CD4-positive, alpha-beta T cell (primary cell): ENCODE measurements at regions of chr1 and their contacts with region 1.

Region 1: DNA sequence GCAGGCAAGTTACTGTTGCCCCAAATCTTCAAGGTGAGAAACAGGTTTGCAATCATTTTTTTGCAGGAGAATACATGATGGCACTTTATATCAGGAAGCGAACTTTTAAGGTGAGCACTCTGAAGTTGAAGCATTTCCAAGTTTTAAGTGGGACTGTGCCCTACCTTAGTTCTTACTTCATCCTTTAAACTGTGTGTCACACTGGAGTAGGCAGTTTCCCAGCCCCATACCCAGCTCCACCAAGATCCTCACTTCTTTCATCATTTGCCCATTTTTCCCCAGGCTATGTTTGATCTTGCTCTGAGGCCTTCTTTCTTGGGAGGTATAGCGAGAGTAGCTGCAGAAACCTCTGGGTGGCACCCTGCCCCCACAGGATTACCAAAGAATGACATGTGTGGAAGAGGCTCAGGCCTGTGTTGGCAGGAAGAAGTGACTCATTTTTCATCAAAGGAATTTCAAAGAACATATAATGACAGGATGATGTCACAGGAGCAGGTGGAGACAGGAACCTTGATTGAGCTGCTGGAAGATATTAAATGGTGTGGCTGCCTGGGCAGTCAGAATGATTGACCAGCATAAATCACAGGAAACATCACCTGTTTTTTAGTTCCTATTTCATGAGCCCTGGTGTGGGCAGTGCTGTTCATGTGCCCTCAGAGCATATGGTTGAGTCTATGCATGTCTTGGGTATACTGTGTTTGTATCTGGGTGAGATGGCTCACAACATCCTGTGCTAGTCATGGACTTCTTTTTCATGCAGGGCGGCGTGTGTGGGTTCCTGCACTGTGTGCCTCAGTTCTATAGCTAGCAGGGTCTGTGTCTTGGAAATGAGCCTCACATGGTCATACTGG is 20.8 kb upstream of the MACF1 start:
- DNase-seq: peak; percentile 67 to 94 (median 80)
- ATAC-seq: peak; percentile 89
- H3K4me3 ChIP-seq: no peak overlapping the region
- H3K4me3 Mint-ChIP-seq: no peak overlapping the region
- H3K27ac ChIP-seq: peak overlapping the region; percentile 85 to 86
- H3K27ac Mint-ChIP-seq: peak overlapping the region; percentile 89
- H3K4me1 ChIP-seq: peaks cover 29% of the 10 kb centered on the region
- H3K4me1 Mint-ChIP-seq: peaks cover 42% of the 10 kb centered on the region
- H3K27me3 ChIP-seq: no peaks in the 10 kb centered on the region
- H3K27me3 Mint-ChIP-seq: no peaks in the 10 kb centered on the region
- CTCF ChIP-seq: peak; percentile 87

Region 2: GRCh38 chr1:38474738-38475623 is 708.7 kb before region 1 on chr1:
- CTCF ChIA-PET with region 1: no interaction called
- POLR2A ChIA-PET with region 1: no interaction called
- intact Hi-C with region 1: no loop called
- DNase-seq: no peak
- ATAC-seq: peak; percentile 51
- H3K4me3 ChIP-seq: no peak overlapping the region
- H3K4me3 Mint-ChIP-seq: peak overlapping the region; percentile 36
- H3K27ac ChIP-seq: no peak overlapping the region
- H3K27ac Mint-ChIP-seq: peak overlapping the region; percentile 18
- H3K4me1 ChIP-seq: peaks cover 12% of the 10 kb centered on the region
- H3K4me1 Mint-ChIP-seq: peaks cover 16% of the 10 kb centered on the region
- H3K27me3 ChIP-seq: peaks cover 21 to 33% of the 10 kb centered on the region in 2 experiments
- H3K27me3 Mint-ChIP-seq: peaks cover 66% of the 10 kb centered on the region
- CTCF ChIP-seq: no peak

Region 3: DNA sequence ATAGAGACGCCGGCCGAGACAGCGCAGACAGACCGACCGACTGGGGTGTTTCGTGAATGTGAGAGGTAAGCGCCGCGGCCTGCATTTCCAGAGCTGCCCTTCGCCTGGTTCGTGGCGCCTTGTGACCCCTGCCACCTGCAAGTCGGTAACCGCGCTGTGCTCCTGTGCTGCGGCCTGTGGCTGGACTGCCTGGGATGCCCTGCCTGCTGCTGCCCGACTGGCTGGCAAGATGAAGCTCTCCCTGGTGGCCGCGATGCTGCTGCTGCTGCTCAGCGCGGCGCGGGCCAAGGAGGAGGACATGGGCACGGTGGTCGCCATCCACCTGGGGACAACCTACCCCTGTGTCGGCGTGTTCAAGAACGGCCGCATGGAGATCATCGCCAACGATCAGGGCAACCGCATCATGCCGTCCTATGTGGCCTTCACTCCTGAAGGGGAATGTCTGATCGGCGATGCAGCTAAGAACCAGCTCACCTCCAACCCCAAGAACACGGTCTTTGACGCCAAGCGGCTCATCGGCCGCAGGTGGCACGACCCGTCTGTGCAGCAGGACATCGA is 474.9 kb before region 1 on chr1:
- CTCF ChIA-PET with region 1: no interaction called
- POLR2A ChIA-PET with region 1: no interaction called
- intact Hi-C with region 1: no loop called
- DNase-seq: no peak
- ATAC-seq: no peak
- H3K4me3 ChIP-seq: no peak overlapping the region
- H3K4me3 Mint-ChIP-seq: no peak overlapping the region
- H3K27ac ChIP-seq: no peak overlapping the region
- H3K27ac Mint-ChIP-seq: no peak overlapping the region
- H3K4me1 ChIP-seq: no peaks in the 10 kb centered on the region
- H3K4me1 Mint-ChIP-seq: no peaks in the 10 kb centered on the region
- H3K27me3 ChIP-seq: peaks cover 0 to 9% of the 10 kb centered on the region in 2 experiments
- H3K27me3 Mint-ChIP-seq: peaks cover 35% of the 10 kb centered on the region
- CTCF ChIP-seq: no peak

Region 4: DNA sequence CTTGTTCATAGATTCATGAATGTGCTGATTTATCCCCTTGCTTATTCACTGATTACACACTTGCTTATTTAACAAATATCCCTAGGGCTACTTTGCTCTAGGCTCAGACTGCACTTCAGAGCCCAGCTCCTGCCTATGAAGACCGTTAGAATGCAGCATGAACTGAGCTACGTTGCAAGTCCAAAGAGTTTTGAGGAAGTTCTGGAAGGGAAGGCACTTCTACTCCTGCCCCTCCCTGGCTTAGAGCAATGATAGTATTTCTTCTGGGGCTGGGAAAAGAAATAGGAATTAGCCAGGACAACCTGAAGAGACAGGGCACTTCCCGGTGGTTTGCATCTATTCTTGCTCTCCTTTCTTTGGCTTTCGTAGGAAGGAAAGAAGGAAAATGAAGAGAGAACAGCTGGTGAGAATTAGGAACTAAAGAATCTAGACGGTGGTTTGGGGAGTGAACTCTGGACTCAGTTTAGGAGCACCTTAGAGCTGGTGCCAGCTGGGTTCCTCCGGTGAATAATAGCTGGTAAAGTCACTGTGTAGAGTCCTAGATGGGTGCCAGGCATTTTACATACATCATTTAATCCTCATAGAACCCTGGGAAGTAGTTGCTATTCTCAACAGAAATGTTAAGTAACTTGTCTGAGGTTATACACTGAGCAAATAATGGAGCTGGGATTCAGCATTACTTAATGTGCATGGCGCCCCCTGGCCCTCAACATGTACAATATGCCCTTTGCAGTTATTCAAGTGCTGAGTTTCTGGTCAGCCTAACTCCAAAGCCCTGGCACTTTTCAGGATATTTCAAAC is 91.7 kb before region 1 on chr1:
- CTCF ChIA-PET with region 1: no interaction called
- POLR2A ChIA-PET with region 1: no interaction called
- intact Hi-C with region 1: no loop called
- DNase-seq: peak in 13 of 14 experiments; percentile 37 to 79 (median 53)
- ATAC-seq: peak; percentile 78
- H3K4me3 ChIP-seq: no peak overlapping the region
- H3K4me3 Mint-ChIP-seq: no peak overlapping the region
- H3K27ac ChIP-seq: no peak overlapping the region
- H3K27ac Mint-ChIP-seq: no peak overlapping the region
- H3K4me1 ChIP-seq: peaks cover 18% of the 10 kb centered on the region
- H3K4me1 Mint-ChIP-seq: peaks cover 10% of the 10 kb centered on the region
- H3K27me3 ChIP-seq: no peaks in the 10 kb centered on the region
- H3K27me3 Mint-ChIP-seq: no peaks in the 10 kb centered on the region
- CTCF ChIP-seq: peak; percentile 78

Region 5: GRCh38 chr1:39105061-39105840 is 78.5 kb before region 1 on chr1:
- CTCF ChIA-PET with region 1: interaction called, 5 read pairs
- POLR2A ChIA-PET with region 1: interaction called, 3 read pairs
- intact Hi-C with region 1: loop called in 1 of 2 experiments (anchors 2 kb)
- DNase-seq: peak; percentile 31 to 81 (median 60)
- ATAC-seq: peak; percentile 84
- H3K4me3 ChIP-seq: peak overlapping the region; percentile 70
- H3K4me3 Mint-ChIP-seq: peak overlapping the region; percentile 72
- H3K27ac ChIP-seq: no peak overlapping the region
- H3K27ac Mint-ChIP-seq: no peak overlapping the region
- H3K4me1 ChIP-seq: peaks cover 19% of the 10 kb centered on the region
- H3K4me1 Mint-ChIP-seq: peaks cover 35% of the 10 kb centered on the region
- H3K27me3 ChIP-seq: no peaks in the 10 kb centered on the region
- H3K27me3 Mint-ChIP-seq: no peaks in the 10 kb centered on the region
- CTCF ChIP-seq: no peak

Region 6: DNA sequence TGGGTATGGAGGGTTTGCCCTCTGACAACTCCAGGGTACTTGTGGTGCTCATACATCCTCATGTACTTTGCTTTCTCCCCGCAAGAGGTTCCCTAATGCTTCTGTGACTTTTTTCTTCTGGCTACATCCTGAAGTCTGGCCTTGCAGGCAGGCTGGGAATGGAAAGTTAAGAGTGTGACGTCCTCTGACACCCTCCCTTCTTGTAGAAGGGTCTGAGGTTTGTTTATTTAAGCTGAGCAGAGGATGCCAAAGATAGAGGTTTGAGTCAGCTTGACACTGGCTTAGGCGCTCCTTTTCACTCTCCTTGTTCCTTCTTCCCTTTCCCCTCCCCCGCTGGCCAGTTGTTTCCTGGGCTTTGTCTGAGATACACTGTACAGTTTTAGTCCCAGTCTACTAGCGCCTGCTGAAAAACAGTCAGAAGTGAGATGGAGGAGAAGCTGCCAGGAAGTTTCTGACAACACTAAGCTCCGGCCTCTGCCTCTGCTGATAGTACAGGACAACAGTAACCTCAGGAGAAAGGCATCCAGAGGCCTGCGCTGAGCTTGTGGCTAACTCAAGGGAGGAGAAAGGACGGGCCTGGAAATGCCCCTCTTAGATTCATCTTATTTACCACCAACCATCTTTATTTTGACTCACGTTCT is 20.8 kb after region 1 on chr1 and contains the start of gene MACF1:
- CTCF ChIA-PET with region 1: interaction called, 23 read pairs
- POLR2A ChIA-PET with region 1: interaction called, 86 read pairs
- intact Hi-C with region 1: no loop called
- DNase-seq: peak in 7 of 14 experiments; percentile 34 to 75 (median 49)
- ATAC-seq: peak; percentile 58
- H3K4me3 ChIP-seq: peak within 1 kb of the TSS; percentile 56
- H3K4me3 Mint-ChIP-seq: peak within 1 kb of the TSS; percentile 93
- H3K27ac ChIP-seq: peak within 1 kb of the TSS; percentile 52 to 70
- H3K27ac Mint-ChIP-seq: peak within 1 kb of the TSS; percentile 90
- H3K4me1 ChIP-seq: peaks cover 27% of the 10 kb centered on the region
- H3K4me1 Mint-ChIP-seq: peaks cover 64% of the 10 kb centered on the region
- H3K27me3 ChIP-seq: no peaks in the 10 kb centered on the region
- H3K27me3 Mint-ChIP-seq: no peaks in the 10 kb centered on the region
- CTCF ChIP-seq: no peak
- total RNA-seq, gene MACF1: 248 to 252 TPM

Region 7: GRCh38 chr1:39220891-39221870 is 37.5 kb after region 1 on chr1:
- CTCF ChIA-PET with region 1: interaction called, 28 read pairs
- POLR2A ChIA-PET with region 1: interaction called, 11 read pairs
- intact Hi-C with region 1: loop called in 1 of 2 experiments (anchors 5 kb)
- DNase-seq: no peak
- ATAC-seq: no peak
- H3K4me3 ChIP-seq: no peak overlapping the region
- H3K4me3 Mint-ChIP-seq: peak overlapping the region; percentile 3
- H3K27ac ChIP-seq: no peak overlapping the region
- H3K27ac Mint-ChIP-seq: peak overlapping the region; percentile 45
- H3K4me1 ChIP-seq: peaks cover 70% of the 10 kb centered on the region
- H3K4me1 Mint-ChIP-seq: peaks cover 77% of the 10 kb centered on the region
- H3K27me3 ChIP-seq: no peaks in the 10 kb centered on the region
- H3K27me3 Mint-ChIP-seq: no peaks in the 10 kb centered on the region
- CTCF ChIP-seq: no peak

Region 8: DNA sequence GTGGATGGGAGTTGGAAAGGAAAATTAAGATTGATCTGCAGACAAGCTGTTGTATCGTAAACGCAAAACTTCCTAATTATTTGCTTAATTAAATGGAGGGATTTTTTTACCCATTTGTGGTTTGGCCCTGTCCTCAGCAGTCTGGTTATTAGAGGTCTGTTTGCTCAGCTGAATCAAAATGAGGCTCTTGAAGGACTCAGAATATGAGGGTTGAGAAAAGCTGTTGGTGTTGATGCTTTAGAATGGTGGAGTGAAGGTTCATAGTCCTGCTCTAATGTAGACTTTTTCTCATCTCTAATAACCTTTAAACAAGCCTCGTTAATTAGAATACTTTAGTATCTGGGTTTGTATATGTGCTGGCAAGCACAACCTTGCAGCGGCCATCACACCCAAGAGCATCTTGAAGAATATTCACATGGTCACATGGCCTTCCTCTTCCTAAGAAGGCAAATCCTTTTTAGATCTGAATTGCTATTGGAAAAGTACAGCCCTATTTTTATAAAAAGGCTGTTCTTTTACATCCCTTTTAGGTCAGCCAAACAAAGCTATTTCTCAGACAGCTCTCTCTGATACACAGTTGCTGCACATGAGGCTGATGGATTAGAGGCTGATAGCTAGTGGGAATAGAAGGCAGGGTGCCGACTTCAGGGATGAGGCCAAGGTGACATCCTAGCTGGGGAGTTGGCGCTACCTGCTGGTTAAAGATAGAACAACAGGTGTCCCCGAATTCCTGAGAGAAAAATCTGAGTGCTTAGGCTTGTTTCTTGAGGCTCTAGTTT is 74.6 kb after region 1 on chr1:
- CTCF ChIA-PET with region 1: interaction called, 376 read pairs
- POLR2A ChIA-PET with region 1: interaction called, 9 read pairs
- intact Hi-C with region 1: loop called (anchors 1 to 2 kb)
- DNase-seq: peak; percentile 38 to 83 (median 62)
- ATAC-seq: peak; percentile 78
- H3K4me3 ChIP-seq: no peak overlapping the region
- H3K4me3 Mint-ChIP-seq: no peak overlapping the region
- H3K27ac ChIP-seq: peak overlapping the region; percentile 13 to 38
- H3K27ac Mint-ChIP-seq: peak overlapping the region; percentile 83
- H3K4me1 ChIP-seq: peaks cover 14% of the 10 kb centered on the region
- H3K4me1 Mint-ChIP-seq: peaks cover 43% of the 10 kb centered on the region
- H3K27me3 ChIP-seq: no peaks in the 10 kb centered on the region
- H3K27me3 Mint-ChIP-seq: no peaks in the 10 kb centered on the region
- CTCF ChIP-seq: peak; percentile 88

Region 9: GRCh38 chr1:39408641-39409054 is 224.9 kb after region 1 on chr1:
- CTCF ChIA-PET with region 1: interaction called, 3 read pairs
- POLR2A ChIA-PET with region 1: no interaction called
- intact Hi-C with region 1: loop called in 1 of 2 experiments (anchors 5 kb)
- DNase-seq: peak; percentile 61 to 96 (median 79)
- ATAC-seq: peak; percentile 83
- H3K4me3 ChIP-seq: peak overlapping the region; percentile 61
- H3K4me3 Mint-ChIP-seq: peak overlapping the region; percentile 77
- H3K27ac ChIP-seq: peak overlapping the region in 1 of 2 donors; percentile 21
- H3K27ac Mint-ChIP-seq: no peak overlapping the region
- H3K4me1 ChIP-seq: peaks cover 40% of the 10 kb centered on the region
- H3K4me1 Mint-ChIP-seq: peaks cover 66% of the 10 kb centered on the region
- H3K27me3 ChIP-seq: no peaks in the 10 kb centered on the region
- H3K27me3 Mint-ChIP-seq: no peaks in the 10 kb centered on the region
- CTCF ChIP-seq: no peak